Dendritic cell treated with granulocyte-macrophage colony-stimulating factor and Interleukin-4, amounts not matched to agents 40 ng/mL and 50 ng/mL, for 4 days (primary cell): ENCODE measurements at regions of chr15 and their contacts with region 1.

Region 1: DNA sequence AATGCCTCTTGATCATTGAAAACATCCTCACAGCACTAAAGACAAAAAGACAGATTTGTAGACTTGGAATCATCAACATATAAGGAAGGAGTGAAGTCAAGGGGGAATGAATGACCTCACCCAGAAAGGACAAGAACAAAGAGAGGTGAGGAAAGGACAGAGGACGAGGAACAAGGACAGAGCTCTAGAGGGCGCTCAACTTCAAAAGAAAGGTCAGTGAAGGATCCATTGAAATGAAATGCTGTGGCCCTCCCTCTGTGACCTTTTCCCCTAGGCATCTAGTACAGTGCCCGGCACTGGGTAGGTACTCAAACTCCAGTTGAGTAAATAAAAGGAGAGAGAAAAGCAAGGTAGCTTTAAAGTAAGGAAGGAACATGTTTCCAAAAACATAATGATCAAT is 2.6 kb downstream of the ATP8B4 start:
- H3K4me3 Mint-ChIP-seq: no peak overlapping the region
- H3K27ac Mint-ChIP-seq: peak overlapping the region; percentile 70
- H3K4me1 Mint-ChIP-seq: peaks cover 66% of the 10 kb centered on the region
- H3K27me3 Mint-ChIP-seq: no peaks in the 10 kb centered on the region

Region 2: DNA sequence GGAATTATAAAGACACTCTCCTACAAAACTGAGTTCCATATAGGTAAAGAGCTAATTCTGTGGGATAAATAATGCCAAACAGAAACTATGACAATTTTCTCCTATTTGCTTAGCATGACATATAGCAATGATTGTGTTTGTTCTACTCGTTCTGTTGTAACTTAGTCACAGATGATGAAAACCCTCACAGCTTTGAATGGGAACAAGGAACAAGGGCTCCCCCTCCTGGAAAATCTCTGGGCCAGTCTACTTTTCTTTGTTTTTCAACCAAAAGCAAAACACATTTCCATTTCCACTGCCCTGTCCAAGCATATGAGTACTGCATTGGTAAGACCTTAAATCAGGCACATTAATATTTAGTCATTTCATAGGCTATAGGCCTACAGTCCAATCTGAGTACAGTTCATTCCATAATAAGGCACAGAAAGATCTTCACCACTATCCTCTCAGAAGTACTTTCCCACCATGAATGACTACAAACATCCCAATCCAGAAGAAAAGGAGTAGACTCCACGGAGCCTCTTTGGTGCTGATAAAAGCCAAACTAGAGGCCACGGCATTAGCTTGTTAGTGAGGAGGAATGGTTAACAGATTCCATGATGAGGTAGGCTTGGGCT is 64.6 kb before region 1 on chr15:
- intact Hi-C with region 1: loop called (anchors 5 kb)
- H3K4me3 Mint-ChIP-seq: no peak overlapping the region
- H3K27ac Mint-ChIP-seq: no peak overlapping the region
- H3K4me1 Mint-ChIP-seq: peaks cover 45% of the 10 kb centered on the region
- H3K27me3 Mint-ChIP-seq: no peaks in the 10 kb centered on the region

Region 3: GRCh38 chr15:50148362-50148963 is 32.0 kb after region 1 on chr15:
- intact Hi-C with region 1: no loop called
- H3K4me3 Mint-ChIP-seq: no peak overlapping the region
- H3K27ac Mint-ChIP-seq: no peak overlapping the region
- H3K4me1 Mint-ChIP-seq: peaks cover 22% of the 10 kb centered on the region
- H3K27me3 Mint-ChIP-seq: no peaks in the 10 kb centered on the region